ENCODE measurements at regions of chr3 and their contacts with region 1.

Region 1: GRCh38 chr3:70358978-70359580 is 46.6 kb upstream of the MDFIC2 start:
- DNase-seq: peak; percentile 15
- H3K4me3 ChIP-seq: no peak overlapping the region
- H3K27ac ChIP-seq: no peak overlapping the region
- H3K4me1 ChIP-seq: no peaks in the 10 kb centered on the region
- H3K27me3 ChIP-seq: no peaks in the 10 kb centered on the region
- CTCF ChIP-seq: peak; percentile 62

Region 2: GRCh38 chr3:69063636-69064035 is 1295.4 kb before region 1 on chr3:
- CTCF ChIA-PET with region 1: no interaction called
- POLR2A ChIA-PET with region 1: interaction called, 15 read pairs
- intact Hi-C with region 1: no loop called
- DNase-seq: no peak
- H3K4me3 ChIP-seq: no peak overlapping the region
- H3K27ac ChIP-seq: no peak overlapping the region
- H3K4me1 ChIP-seq: no peaks in the 10 kb centered on the region
- H3K27me3 ChIP-seq: no peaks in the 10 kb centered on the region
- CTCF ChIP-seq: no peak

Region 3: GRCh38 chr3:70090322-70090913 is 268.7 kb before region 1 on chr3:
- CTCF ChIA-PET with region 1: no interaction called
- POLR2A ChIA-PET with region 1: no interaction called
- intact Hi-C with region 1: loop called (anchors 10 kb)
- DNase-seq: peak; percentile 12
- H3K4me3 ChIP-seq: no peak overlapping the region
- H3K27ac ChIP-seq: no peak overlapping the region
- H3K4me1 ChIP-seq: no peaks in the 10 kb centered on the region
- H3K27me3 ChIP-seq: no peaks in the 10 kb centered on the region
- CTCF ChIP-seq: peak; percentile 55

Region 4: GRCh38 chr3:70119879-70120278 is 239.2 kb before region 1 on chr3:
- CTCF ChIA-PET with region 1: no interaction called
- POLR2A ChIA-PET with region 1: no interaction called
- intact Hi-C with region 1: loop called (anchors 5 kb)
- DNase-seq: no peak
- H3K4me3 ChIP-seq: no peak overlapping the region
- H3K27ac ChIP-seq: no peak overlapping the region
- H3K4me1 ChIP-seq: no peaks in the 10 kb centered on the region
- H3K27me3 ChIP-seq: no peaks in the 10 kb centered on the region
- CTCF ChIP-seq: no peak

Region 5: GRCh38 chr3:70621451-70621850 is 262.4 kb after region 1 on chr3:
- CTCF ChIA-PET with region 1: no interaction called
- POLR2A ChIA-PET with region 1: no interaction called
- intact Hi-C with region 1: no loop called
- DNase-seq: no peak
- H3K4me3 ChIP-seq: no peak overlapping the region
- H3K27ac ChIP-seq: no peak overlapping the region
- H3K4me1 ChIP-seq: no peaks in the 10 kb centered on the region
- H3K27me3 ChIP-seq: no peaks in the 10 kb centered on the region
- CTCF ChIP-seq: no peak

Measured in A673 (cell line).